PC-3 (cell line): ENCODE measurements at regions of chr17 and their contacts with region 1.

Region 1: GRCh38 chr17:75632863-75633485 is at the start of gene SMIM5:
- DNase-seq: peak; percentile 92
- ATAC-seq: peak; percentile 85
- H3K4me3 ChIP-seq: no peak within 1 kb of the TSS
- H3K27ac ChIP-seq: peak within 1 kb of the TSS; percentile 89
- H3K4me1 ChIP-seq: peaks cover 16% of the 10 kb centered on the region
- H3K27me3 ChIP-seq: no peaks in the 10 kb centered on the region
- CTCF ChIP-seq: peak; percentile 98
- total RNA-seq, gene SMIM5: 2.3 and 4.3 TPM in 2 replicates

Region 2: DNA sequence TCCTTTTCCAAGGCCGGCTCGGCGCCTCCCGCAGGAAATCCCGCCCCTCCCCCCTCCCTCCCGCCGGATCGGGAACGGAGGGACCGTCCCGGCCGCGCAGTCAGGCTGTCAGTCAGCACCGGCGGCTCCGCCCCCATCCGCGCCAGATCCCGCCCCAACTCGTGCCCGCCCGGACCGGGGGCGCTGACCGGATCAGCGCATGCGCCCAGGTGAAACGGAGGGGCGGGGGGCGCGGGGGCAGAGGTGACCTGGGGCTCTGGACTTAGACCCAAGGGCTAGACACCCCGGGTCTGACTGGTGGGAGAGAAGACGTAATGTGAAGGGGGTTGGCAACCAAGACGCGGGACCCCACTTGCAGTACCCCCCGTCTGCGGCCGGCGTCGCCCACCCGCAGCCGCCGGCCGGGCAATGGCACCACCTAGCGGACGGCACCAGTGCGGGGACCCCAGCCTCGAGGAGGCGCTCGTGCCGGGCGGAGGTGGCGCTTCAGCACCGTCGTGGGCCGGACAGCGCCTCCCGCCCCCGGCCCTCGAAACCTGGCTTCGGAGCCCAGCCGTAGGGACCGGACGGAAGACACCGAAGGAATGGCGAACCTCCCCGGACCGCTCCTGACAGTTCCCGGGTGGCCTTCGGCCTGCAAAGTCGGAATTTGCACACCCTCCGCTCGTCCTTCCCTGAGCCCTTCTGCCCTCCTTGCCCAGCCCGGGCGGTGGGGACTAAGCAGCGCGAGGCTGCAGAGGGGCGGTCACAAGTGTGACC is 117.3 kb before region 1 on chr17 and contains the start of gene CASKIN2:
- CTCF ChIA-PET with region 1: interaction called, 3 read pairs
- POLR2A ChIA-PET with region 1: no interaction called
- intact Hi-C with region 1: loop called (anchors 5 kb)
- DNase-seq: peak; percentile 98
- ATAC-seq: peak; percentile 71
- H3K4me3 ChIP-seq: peak within 1 kb of the TSS; percentile 78
- H3K27ac ChIP-seq: peak within 1 kb of the TSS; percentile 8
- H3K4me1 ChIP-seq: peaks cover 47% of the 10 kb centered on the region
- H3K27me3 ChIP-seq: no peaks in the 10 kb centered on the region
- CTCF ChIP-seq: peak; percentile 100
- total RNA-seq, gene CASKIN2: 22.0 and 28.3 TPM in 2 replicates

Region 3: DNA sequence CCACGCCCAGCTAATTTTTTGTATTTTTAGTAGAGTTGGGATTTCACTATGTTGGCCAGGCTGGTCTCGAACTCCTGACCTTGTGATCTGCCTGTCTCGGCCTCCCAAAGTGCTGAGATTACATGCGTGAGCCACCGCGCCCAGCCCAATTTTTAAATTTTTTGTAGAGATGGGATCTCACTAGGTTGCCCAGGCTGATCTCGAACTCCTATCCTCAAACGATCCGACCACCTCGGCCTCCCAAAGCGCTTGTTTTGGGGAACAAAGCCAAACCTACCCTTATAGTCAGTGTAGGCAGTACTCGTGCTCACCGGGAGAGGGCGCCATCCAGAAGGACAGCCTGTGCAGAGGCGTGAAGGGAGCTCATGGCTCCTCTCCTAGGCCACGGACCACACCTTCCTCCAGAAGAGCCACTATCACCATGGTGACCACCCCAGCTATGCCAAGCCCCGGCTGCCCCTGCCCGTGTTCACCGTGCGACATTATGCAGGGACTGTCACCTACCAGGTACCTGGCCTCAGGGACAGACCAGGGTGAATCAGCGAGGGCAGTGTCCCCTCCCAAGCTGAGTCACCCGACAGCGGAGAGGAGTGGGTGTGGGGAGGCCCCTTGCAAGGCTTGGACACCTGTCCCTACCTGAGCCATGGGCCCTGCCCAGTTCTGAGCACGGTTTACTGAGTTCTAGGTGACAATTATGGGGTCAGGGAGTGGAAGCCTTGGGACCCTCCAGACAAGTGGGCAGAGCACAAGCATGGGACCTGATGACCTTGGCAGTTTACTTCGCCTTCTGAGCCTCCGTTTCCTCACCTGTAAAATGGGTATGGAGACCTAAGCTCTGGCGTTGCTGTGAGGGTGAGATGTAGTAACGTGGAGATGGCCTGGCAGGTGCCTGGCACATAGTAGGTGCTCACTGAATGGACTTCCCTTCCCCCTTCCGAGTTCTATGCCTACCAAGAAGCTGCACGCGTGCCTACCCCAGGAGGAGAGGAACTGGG is 31.6 kb before region 1 on chr17:
- CTCF ChIA-PET with region 1: interaction called, 22 read pairs
- POLR2A ChIA-PET with region 1: no interaction called
- intact Hi-C with region 1: no loop called
- DNase-seq: peak; percentile 77
- ATAC-seq: peak; percentile 54
- H3K4me3 ChIP-seq: no peak overlapping the region
- H3K27ac ChIP-seq: no peak overlapping the region
- H3K4me1 ChIP-seq: peaks cover 27% of the 10 kb centered on the region
- H3K27me3 ChIP-seq: no peaks in the 10 kb centered on the region
- CTCF ChIP-seq: peak; percentile 95

Region 4: DNA sequence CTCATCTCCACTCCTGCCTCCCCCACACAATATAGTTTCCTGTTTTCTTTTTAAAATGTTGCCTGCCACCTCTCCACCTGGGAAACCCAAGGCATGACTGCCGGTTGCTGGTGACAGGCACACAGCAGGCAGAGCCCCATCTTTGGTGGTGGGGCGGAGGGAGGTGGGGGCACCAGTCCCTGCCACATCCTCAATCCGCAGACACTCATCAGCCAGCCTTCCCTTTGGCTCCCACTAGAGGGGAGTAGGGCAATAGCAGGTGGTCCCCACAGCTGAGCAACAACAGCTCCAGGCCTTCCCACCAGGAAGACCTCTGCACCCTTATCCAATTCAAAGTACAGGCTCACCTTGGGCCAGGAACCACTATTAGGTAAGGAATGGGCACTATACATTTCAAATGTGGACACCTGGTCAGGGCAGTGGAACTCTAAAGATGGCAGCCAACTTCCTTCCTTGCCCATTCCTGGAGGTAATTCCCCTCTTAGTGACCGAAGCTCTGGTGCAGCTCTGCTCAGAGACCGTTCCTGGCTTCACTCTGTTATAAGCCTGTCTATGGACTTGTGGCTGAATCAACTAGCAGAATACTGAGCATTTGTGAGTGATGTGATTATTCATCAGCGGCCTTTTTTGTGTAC is 20.1 kb after region 1 on chr17:
- CTCF ChIA-PET with region 1: interaction called, 83 read pairs
- POLR2A ChIA-PET with region 1: no interaction called
- intact Hi-C with region 1: loop called (anchors 1 kb)
- DNase-seq: peak; percentile 55
- ATAC-seq: peak; percentile 73
- H3K4me3 ChIP-seq: no peak overlapping the region
- H3K27ac ChIP-seq: no peak overlapping the region
- H3K4me1 ChIP-seq: no peaks in the 10 kb centered on the region
- H3K27me3 ChIP-seq: no peaks in the 10 kb centered on the region
- CTCF ChIP-seq: peak; percentile 92

Region 5: DNA sequence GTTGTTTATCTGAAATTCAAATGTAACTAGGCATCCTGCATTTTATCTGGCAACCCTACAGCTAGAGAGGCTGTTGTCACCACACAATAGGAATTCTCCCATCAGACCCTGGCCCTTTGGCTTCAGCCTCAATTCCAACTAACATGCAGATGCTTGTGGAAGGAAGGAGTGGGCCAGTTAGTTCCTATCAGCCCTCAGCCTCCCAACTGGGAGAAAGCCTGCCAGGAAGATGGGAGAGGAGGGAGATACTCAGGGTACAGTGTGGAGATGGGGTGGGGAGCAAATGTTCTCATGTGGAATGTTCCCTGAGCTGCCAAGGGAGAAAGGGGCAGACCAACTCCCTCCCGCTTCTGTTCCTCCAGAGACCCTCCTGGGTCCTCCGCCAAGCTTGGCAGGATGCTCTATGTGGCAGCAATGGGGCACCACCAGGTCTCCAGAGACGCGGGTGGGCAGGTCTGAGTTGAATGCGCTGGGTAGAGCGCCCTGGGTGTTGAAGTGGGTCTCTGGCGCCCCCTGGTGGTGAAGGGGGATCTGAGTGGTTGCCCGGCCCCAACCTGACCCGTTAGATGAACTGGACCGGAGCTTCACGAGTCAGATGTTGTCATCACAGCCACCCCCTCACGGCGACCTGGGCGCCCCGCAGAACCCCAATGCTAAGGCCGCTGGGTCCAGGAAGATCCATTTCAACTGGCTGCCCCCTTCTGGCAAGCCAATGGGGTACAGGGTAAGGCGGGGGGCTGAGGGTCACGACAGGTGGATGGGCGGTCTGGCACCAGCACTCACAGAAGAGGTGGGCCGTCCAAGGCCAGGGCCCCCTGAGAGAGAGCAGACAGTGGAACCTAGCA is 116.8 kb after region 1 on chr17:
- CTCF ChIA-PET with region 1: interaction called, 27 read pairs
- POLR2A ChIA-PET with region 1: no interaction called
- intact Hi-C with region 1: loop called (anchors 1 kb)
- DNase-seq: peak; percentile 79
- ATAC-seq: peak; percentile 78
- H3K4me3 ChIP-seq: no peak overlapping the region
- H3K27ac ChIP-seq: no peak overlapping the region
- H3K4me1 ChIP-seq: no peaks in the 10 kb centered on the region
- H3K27me3 ChIP-seq: no peaks in the 10 kb centered on the region
- CTCF ChIP-seq: peak; percentile 98